CD14-positive monocyte (primary cell): ENCODE measurements at regions of chr4 and their contacts with region 1.

Region 1: GRCh38 chr4:139076016-139076744 is 60.6 kb downstream of the NOCT start:
- DNase-seq: no peak
- H3K4me3 ChIP-seq: no peak overlapping the region
- H3K4me3 Mint-ChIP-seq: no peak overlapping the region
- H3K27ac ChIP-seq: peak overlapping the region in 1 of 2 donors; percentile 27
- H3K27ac Mint-ChIP-seq: peak overlapping the region in 1 of 7 donors; percentile 10
- H3K4me1 ChIP-seq: peaks cover 4 to 6% of the 10 kb centered on the region in 2 donors
- H3K4me1 Mint-ChIP-seq: peaks cover 12% of the 10 kb centered on the region
- H3K27me3 ChIP-seq: no peaks in the 10 kb centered on the region
- H3K27me3 Mint-ChIP-seq: no peaks in the 10 kb centered on the region
- CTCF ChIP-seq: no peak

Region 2: DNA sequence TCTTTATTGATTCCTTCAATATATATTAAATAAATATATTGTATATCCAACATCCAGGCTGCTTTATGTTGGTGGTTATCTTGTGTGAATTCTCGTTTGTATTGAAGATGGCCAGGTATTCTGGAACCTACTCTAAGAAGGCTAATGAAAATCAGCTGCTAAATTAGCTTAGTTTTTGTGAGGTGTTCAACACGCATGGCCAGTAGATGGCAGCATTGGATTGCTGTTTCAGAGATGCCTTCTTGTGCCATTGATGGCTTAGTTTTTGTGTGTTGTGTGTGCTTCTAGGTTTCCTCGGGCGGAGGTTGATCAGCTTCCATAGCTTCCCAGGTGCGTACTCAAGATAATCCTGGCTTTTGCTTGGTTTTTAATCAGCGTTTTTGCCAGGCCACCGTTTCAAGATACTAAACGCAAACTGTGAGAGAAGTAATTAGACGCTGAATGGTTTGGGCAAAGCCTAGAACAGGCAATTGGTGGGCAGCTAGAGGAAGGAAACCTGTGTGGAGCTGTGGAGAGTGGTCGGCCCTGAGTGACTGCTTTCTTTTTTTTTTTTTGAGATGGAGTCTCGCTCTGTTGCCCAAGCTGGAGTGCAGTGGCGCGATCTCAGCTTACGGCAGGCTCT is 45.5 kb before region 1 on chr4:
- intact Hi-C with region 1: no loop called
- DNase-seq: peak; percentile 64 to 77 (median 74)
- H3K4me3 ChIP-seq: no peak overlapping the region
- H3K4me3 Mint-ChIP-seq: no peak overlapping the region
- H3K27ac ChIP-seq: no peak overlapping the region
- H3K27ac Mint-ChIP-seq: peak overlapping the region in 4 of 7 donors; percentile 22 to 84 (median 50)
- H3K4me1 ChIP-seq: peaks cover 18 to 25% of the 10 kb centered on the region in 2 donors
- H3K4me1 Mint-ChIP-seq: peaks cover 51% of the 10 kb centered on the region
- H3K27me3 ChIP-seq: no peaks in the 10 kb centered on the region
- H3K27me3 Mint-ChIP-seq: no peaks in the 10 kb centered on the region
- CTCF ChIP-seq: peak; percentile 83

Region 3: GRCh38 chr4:139042981-139043460 is 33.2 kb before region 1 on chr4:
- intact Hi-C with region 1: loop called in 1 of 2 experiments (anchors 5 kb)
- DNase-seq: no peak
- H3K4me3 ChIP-seq: no peak overlapping the region
- H3K4me3 Mint-ChIP-seq: no peak overlapping the region
- H3K27ac ChIP-seq: peak overlapping the region in 1 of 2 donors; percentile 44
- H3K27ac Mint-ChIP-seq: peak overlapping the region in 3 of 7 donors; percentile 28 to 63 (median 40)
- H3K4me1 ChIP-seq: no peaks in the 10 kb centered on the region
- H3K4me1 Mint-ChIP-seq: no peaks in the 10 kb centered on the region
- H3K27me3 ChIP-seq: no peaks in the 10 kb centered on the region
- H3K27me3 Mint-ChIP-seq: no peaks in the 10 kb centered on the region
- CTCF ChIP-seq: no peak

Region 4: DNA sequence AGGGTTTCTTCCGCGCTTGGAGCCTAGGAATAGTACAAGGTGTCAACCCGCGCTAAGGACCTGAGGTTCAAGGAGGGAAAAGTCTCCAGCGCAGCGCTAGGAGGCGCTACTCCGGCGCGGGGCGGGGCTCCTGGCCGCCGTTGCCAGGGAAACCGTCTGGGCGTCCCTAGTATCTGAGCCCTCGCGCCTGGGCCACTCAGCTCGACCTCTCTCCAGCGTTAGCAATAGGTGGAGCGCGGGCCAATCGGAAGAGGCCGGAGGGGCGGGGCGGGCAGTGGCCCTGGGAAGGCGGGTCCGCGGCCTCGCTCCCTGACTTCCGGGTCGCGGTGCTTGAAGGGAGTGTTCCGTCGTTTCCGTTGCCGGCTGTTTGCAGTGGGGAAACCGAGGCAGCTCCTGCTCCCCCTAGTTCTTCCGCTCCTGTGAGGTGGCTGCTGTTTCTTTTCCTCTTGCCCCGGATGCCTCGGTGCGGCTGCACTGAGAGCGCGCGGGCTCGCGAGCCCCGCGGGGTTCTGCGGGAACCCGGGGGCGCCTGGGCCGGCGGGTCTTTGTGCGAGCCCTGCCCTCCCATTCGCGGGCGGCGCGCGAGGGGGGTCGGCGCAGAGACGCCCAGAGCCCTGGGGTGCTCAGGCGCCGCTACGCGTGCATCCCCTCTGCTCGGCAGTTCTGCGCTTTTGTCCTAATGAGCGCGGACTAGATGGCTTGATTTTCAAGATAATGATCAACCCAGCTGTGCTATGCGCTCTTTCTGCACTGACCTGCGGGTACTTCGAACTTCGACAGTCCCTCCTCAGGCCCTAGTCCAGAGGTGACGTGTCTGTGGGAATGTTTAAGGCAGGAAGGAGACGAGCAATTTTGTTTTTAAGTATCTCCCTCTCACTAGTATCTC is 1447.9 kb after region 1 on chr4 and contains the start of gene ELMOD2:
- intact Hi-C with region 1: loop called in 1 of 2 experiments (anchors 5 kb)
- DNase-seq: peak; percentile 96 to 97 (median 97)
- H3K4me3 ChIP-seq: peak within 1 kb of the TSS; percentile 63 to 93 (median 82)
- H3K4me3 Mint-ChIP-seq: peak within 1 kb of the TSS; percentile 82 to 95
- H3K27ac ChIP-seq: peak within 1 kb of the TSS; percentile 38 to 91
- H3K27ac Mint-ChIP-seq: peak within 1 kb of the TSS; percentile 83 to 95 (median 89)
- H3K4me1 ChIP-seq: peaks cover 12 to 15% of the 10 kb centered on the region in 2 donors
- H3K4me1 Mint-ChIP-seq: peaks cover 12% of the 10 kb centered on the region
- H3K27me3 ChIP-seq: no peaks in the 10 kb centered on the region
- H3K27me3 Mint-ChIP-seq: peaks cover 0 to 2% (median 2%) of the 10 kb centered on the region in 3 donors
- CTCF ChIP-seq: peak; percentile 91
- polyA plus RNA-seq, gene ELMOD2: 4.0 to 7.6 (median 4.9) TPM